Mammary epithelial cell (primary cell): ENCODE measurements at regions of chr2 and their contacts with region 1.

Region 1: DNA sequence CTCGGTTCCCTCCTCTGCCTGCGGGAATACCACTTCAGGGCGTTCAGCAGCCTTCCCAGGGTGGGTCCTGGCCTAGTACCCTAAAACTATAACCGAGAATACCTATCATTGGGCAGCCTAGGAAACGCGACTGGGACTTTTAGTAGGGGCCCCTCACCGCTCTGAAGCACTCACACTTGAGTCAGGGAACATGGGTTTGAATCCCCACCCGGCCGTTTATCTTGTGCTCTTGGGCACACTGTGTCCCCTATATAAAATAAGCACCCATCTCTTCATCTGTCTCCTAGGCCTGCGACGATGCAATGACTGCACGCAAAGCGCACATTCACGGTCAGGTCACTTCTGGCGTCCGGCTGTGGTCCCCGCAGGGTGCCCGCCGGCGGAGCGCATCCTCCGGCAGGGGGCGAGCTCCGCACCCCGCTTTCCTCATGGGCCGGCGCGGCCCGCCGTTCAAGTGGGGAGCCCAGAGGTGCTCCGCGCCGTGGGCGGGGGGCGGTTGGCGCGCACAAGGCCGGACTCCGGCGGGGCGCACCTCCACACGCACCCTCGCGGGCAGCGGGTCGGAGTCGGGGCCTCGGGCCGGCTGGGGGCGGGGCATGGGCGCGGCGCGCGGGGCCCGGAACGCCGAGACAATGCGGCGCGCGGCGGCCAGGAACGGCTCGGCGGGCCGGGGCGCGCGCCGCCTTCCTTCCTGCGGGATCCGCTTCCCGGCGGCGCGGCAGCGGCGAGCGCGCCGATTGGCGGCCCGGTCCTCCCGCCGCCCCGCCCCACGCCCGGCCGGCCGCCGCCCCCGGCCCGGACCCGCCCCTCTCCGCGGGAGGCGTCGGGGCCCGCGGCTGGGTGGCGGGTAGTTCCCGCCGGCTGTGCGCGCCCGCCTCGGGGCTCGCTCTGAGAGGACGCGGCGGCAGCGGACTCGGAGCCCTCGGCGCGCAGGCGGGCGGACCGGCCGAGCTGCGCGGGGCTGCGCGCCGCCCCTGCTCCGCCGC is at the start of gene ASAP2:
- DNase-seq: peak; percentile 70
- H3K4me3 ChIP-seq: peak within 1 kb of the TSS; percentile 65 to 98 (median 85)
- H3K27ac ChIP-seq: peak within 1 kb of the TSS; percentile 79
- H3K4me1 ChIP-seq: peaks cover 13% of the 10 kb centered on the region
- H3K27me3 ChIP-seq: no peaks in the 10 kb centered on the region
- CTCF ChIP-seq: peak; percentile 60 to 80
- total RNA-seq, gene ASAP2: 40.8 to 137 TPM

Region 2: DNA sequence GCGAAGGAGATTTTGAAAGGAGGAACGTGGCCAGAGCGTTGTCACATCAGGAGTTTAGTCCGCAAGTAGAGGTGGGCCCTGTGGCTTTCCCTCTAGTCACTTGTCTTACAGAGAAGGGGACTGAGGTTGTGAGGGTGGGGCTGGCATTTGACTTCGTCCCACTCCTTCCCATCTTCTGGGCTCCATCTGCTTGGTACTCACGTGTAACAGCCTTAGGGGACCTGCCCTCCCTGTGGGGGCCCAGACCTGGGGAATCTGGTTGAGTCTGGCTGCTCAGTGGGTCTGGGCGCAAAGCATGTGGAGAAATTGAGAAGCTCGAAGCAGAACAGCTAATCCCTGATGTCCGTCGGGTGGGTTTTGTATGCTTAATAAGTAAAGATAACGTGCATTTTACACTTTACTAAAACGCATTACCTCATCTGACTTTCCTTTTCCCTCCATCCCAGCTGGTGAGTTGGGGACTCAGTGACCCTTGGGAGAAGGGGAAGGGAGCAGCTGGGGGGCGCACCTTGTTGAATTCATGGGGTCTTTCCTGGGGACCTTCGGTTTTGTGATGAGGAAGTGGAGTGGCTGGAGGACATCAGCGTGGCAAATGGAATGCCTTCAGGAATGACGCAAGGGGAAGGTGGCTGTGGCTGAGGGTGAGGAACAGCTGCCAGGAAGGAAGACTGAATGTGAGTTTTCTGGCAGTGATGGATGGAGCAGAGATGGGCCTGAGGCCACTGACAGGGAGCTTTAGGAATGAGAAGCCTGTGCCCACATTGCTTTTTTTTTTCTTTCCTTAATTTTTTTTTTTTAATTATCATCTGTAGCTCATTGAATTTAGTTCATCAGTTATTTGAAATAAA is 45.1 kb after region 1 on chr2:
- CTCF ChIA-PET with region 1: no interaction called
- dilution Hi-C with region 1: no loop called
- in situ Hi-C with region 1: no loop called
- intact Hi-C with region 1: loop called (anchors 1 kb)
- DNase-seq: peak; percentile 82
- H3K4me3 ChIP-seq: no peak overlapping the region
- H3K27ac ChIP-seq: peak overlapping the region; percentile 95
- H3K4me1 ChIP-seq: peaks cover 71% of the 10 kb centered on the region
- H3K27me3 ChIP-seq: no peaks in the 10 kb centered on the region
- CTCF ChIP-seq: no peak

Region 3: DNA sequence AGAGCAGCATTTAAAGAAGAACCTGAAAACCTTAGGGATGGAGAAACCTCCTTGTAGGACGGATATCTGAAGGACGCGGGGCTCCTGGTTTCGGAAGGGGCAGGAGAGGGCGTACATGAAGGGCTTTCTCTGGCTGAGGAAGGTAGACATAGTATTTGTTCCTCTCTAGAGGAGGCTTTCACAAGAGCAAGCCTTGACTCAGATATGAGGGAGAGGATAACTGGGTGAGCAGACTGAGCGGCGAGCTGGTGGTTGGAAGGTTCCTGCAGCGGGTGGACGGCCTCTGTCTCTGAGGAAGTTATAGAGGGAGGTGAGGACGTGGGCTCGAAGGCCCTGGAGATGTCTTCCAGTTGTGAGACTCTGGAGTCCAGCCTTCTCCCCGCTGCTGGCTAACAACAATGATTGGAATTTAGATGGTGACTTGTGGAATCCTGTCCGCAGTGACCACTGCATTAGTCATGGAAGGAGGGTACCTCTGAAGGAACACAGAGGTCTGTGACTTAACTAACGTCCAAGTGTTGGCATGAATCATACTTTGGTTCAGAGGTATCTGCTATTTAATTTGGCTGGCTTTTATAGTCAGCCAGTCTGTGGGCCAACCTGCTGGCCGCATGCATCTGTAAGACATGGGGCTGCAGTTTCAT is 81.3 kb after region 1 on chr2:
- CTCF ChIA-PET with region 1: interaction called, 6 read pairs
- dilution Hi-C with region 1: no loop called
- in situ Hi-C with region 1: no loop called
- intact Hi-C with region 1: loop called (anchors 1 kb)
- DNase-seq: peak; percentile 99
- H3K4me3 ChIP-seq: no peak overlapping the region
- H3K27ac ChIP-seq: peak overlapping the region; percentile 94
- H3K4me1 ChIP-seq: peaks cover 56% of the 10 kb centered on the region
- H3K27me3 ChIP-seq: no peaks in the 10 kb centered on the region
- CTCF ChIP-seq: no peak

Region 4: GRCh38 chr2:9310377-9310776 is 104.1 kb after region 1 on chr2:
- CTCF ChIA-PET with region 1: no interaction called
- dilution Hi-C with region 1: loop called (anchors 5 kb)
- in situ Hi-C with region 1: loop called in 1 of 2 experiments (anchors 10 kb)
- intact Hi-C with region 1: loop called (anchors 1 kb)
- DNase-seq: peak; percentile 93
- H3K4me3 ChIP-seq: no peak overlapping the region
- H3K27ac ChIP-seq: peak overlapping the region; percentile 95
- H3K4me1 ChIP-seq: peaks cover 69% of the 10 kb centered on the region
- H3K27me3 ChIP-seq: no peaks in the 10 kb centered on the region
- CTCF ChIP-seq: no peak

Region 5: DNA sequence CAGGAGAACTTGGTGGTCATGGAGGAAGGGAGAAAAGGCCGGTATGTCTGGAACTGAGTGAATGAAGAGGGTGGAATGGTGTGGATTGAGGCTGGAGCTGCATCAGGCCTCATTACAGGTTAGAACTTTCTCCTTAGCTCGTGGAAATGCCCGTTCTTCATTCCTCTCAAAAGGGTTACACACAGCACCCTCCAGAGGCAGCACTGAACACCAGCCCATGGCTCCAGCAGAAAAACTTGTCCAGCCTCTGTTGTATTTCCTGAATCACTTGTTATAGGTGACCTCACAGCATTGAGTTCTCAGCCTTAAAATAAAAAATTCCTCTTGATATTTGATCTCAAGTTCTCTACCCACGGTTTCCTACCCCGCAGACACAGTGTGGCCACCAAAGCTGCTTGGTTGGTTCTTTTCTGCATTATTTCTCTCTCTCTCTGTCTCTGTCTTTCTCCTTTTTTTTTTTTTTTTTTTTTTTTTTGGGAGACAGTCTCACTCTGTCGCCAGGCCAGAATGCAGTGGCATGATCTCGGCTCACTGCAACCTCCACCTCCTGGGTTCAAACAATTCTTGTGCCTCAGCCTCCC is 127.4 kb after region 1 on chr2:
- CTCF ChIA-PET with region 1: no interaction called
- dilution Hi-C with region 1: loop called (anchors 5 kb)
- in situ Hi-C with region 1: no loop called
- intact Hi-C with region 1: loop called (anchors 1 kb)
- DNase-seq: peak; percentile 71
- H3K4me3 ChIP-seq: no peak overlapping the region
- H3K27ac ChIP-seq: no peak overlapping the region
- H3K4me1 ChIP-seq: peaks cover 13% of the 10 kb centered on the region
- H3K27me3 ChIP-seq: no peaks in the 10 kb centered on the region
- CTCF ChIP-seq: peak; percentile 75 to 85

Region 6: GRCh38 chr2:9693211-9693520 is 486.9 kb after region 1 on chr2:
- CTCF ChIA-PET with region 1: no interaction called
- dilution Hi-C with region 1: loop called (anchors 10 kb)
- in situ Hi-C with region 1: no loop called
- intact Hi-C with region 1: no loop called
- DNase-seq: peak; percentile 47
- H3K4me3 ChIP-seq: no peak overlapping the region
- H3K27ac ChIP-seq: no peak overlapping the region
- H3K4me1 ChIP-seq: peaks cover 13% of the 10 kb centered on the region
- H3K27me3 ChIP-seq: no peaks in the 10 kb centered on the region
- CTCF ChIP-seq: no peak